Psoas muscle (tissue), 8 donors: ENCODE measurements at regions of chr6 and their contacts with region 1.

Region 1: DNA sequence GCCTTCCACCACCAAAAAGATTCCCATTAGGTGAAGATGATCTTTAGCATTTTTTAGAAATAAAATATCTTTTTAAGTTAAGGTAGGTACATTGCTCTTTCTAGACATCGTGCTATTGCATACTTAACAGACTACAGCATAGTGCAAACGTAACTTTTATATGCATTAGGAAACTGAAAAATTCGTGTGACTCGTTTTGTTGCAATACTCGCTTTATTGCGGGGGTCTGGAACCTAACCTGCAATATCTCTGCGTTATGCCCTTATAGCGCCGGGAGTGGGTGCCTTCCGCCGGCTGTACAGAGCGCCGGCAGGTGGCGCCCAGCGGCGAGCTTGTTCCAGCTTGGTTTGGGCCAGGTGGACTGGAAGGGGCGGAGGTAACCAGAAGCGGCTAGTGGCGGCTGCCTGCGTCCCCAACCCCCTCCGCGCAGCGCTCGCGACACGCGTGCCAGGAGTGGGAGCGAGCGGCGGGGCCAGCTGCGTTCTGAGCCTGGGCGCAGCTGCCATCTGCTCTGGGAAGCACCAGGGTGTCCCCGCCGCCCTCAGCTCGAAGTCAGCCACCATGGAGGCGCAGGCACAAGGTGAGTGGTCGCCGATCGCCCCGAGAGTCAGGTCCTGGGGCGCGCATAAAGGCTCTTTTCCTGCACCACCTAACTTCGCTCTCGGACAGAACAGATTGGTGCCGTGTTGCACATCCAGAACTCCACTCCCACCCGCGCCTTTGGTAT is at the start of gene TPD52L1:
- DNase-seq: peak; percentile 83 to 95
- ATAC-seq: peak; percentile 92 to 95 (median 93)
- H3K4me3 ChIP-seq: peak within 1 kb of the TSS; percentile 78
- H3K27ac ChIP-seq: peak within 1 kb of the TSS; percentile 91
- H3K4me1 ChIP-seq: peaks cover 56% of the 10 kb centered on the region
- H3K27me3 ChIP-seq: no peaks in the 10 kb centered on the region
- CTCF ChIP-seq: peak; percentile 95
- total RNA-seq, gene TPD52L1: 106 to 150 (median 136) TPM

Region 2: DNA sequence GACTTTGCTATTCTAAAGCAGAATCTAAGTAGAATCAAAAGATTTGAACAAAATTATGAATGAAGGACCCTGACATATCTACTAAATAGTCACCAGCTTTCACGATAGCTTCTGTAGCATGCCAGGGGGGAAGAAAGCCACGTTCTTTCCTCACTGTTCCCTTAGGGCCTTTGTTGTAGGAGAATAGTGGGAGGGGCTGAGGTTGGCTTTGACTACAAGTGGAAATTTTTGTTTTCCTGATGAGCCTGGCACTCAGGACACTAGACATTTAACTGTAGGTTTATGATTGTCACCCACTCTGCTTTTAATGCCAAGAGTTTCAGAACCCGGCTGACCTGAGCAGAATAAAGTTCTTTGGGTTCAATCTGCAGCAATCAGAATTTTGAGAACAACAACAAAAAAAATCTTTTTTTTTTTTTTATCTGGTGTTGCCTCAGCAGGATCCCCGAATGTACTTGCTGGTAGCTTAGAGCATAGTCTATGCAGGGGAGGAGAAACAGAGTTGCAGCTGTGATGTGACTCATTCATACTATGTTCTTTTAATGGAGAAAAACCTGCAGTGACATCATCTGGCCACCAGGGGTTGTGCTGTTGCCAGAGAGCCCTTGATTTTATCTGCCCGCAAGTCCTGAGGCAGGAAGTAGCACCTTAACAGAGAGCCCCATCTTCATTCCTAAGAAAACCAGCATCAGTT is 38.5 kb after region 1 on chr6:
- intact Hi-C with region 1: loop called (anchors 2 to 5 kb)
- DNase-seq: peak; percentile 52 to 68
- ATAC-seq: peak; percentile 42 to 80 (median 74)
- H3K4me3 ChIP-seq: no peak overlapping the region
- H3K27ac ChIP-seq: peak overlapping the region; percentile 89
- H3K4me1 ChIP-seq: peaks cover 76% of the 10 kb centered on the region
- H3K27me3 ChIP-seq: no peaks in the 10 kb centered on the region
- CTCF ChIP-seq: peak; percentile 68

Region 3: DNA sequence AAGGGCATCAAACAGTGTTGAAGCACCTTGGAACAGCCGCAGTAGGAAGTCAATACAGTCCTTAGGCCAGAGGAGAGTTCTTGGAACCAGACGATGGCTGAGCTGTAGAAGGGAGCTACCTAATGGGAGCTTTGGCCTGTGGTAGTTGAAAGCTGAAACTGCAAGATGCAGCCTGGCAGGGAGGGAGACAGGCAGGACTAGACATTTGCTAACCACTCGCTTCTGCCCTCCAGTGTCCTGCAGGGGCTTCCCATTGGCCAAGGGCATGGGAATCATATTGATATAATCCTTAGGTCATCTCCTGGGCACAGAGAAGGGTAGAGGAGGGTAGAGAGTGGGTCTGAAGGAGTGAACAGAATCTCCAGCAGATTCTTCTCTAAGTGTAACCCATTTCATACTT is 60.4 kb after region 1 on chr6:
- intact Hi-C with region 1: loop called in 1 of 2 experiments (anchors 5 kb)
- DNase-seq: peak in 1 of 2 donors; percentile 55
- ATAC-seq: peak; percentile 76 to 83 (median 78)
- H3K4me3 ChIP-seq: peak overlapping the region; percentile 8
- H3K27ac ChIP-seq: peak overlapping the region; percentile 60
- H3K4me1 ChIP-seq: peaks cover 65% of the 10 kb centered on the region
- H3K27me3 ChIP-seq: no peaks in the 10 kb centered on the region
- CTCF ChIP-seq: no peak

Region 4: DNA sequence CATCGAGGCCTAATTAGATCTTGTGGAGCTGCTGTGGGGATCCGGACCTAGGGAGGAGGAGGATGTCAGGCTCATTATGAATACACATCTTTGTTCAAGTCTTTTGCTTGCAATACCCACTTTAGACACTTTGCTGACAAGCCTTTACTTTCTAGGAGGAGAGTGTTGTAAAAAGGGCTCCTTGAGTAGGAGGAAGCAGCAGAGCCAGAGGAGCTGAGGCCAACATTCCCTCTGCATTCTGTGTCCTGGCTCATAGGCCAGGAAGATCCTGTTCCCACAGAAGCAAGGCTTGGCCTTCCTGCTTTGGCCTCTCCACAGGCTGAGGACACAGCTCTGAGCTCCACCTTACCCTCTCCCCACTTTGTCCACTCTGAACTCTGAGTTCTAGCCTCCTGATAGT is 67.2 kb after region 1 on chr6:
- intact Hi-C with region 1: loop called in 1 of 2 experiments (anchors 5 kb)
- DNase-seq: peak; percentile 35 to 78
- ATAC-seq: peak; percentile 72 to 96 (median 89)
- H3K4me3 ChIP-seq: no peak overlapping the region
- H3K27ac ChIP-seq: peak overlapping the region; percentile 67
- H3K4me1 ChIP-seq: peaks cover 77% of the 10 kb centered on the region
- H3K27me3 ChIP-seq: no peaks in the 10 kb centered on the region
- CTCF ChIP-seq: peak; percentile 14

Region 5: DNA sequence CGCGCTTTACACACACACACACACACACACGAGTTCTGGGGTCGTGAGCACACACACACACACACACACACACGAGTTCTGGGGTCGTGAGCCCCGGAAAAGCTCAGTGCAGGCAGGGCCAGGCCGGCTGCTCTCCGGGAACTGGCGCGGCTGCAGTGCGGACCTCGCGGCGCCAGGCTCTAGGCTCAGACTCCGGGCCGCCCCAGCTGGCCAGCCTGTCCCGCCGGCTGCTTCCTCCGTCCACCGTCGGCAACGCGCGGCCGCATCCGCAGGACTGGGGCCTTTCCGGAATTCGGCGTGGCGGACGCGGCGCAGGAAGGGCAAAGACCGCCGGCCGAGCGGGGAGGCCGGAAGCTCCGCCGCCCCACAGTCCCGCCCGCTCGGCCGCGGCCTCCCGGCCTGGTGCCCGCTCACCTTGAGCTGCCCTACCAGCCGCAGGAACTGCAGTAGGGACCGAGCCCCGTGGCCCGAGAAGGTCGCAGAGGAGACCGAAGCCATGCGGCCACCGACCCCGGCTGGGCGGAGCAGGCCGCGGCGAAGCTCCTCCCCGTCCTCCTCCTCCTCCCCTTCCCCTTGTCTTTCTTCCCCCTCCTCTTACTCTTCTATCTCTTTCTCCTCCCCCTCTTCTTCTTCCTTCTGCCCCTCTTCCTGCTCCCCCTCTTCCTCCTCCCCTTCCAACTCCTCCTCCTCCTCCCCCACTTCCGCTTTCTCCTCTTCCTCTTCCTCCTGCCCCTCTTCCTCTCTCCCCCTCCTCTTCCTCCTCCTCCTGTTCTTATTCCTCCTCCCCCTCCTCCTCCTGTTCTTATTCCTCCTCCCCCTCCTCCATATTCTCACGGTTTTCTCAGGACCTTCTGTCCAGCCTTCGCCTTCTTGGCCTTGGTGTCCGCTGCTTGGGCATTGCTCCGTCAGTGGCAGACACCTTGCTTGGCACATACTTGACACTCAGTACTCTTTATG is 148.2 kb after region 1 on chr6 and contains the start of gene HDDC2:
- intact Hi-C with region 1: loop called (anchors 2 to 5 kb)
- DNase-seq: peak; percentile 83 to 87
- ATAC-seq: peak; percentile 86 to 92 (median 88)
- H3K4me3 ChIP-seq: peak within 1 kb of the TSS; percentile 86
- H3K27ac ChIP-seq: peak within 1 kb of the TSS; percentile 92
- H3K4me1 ChIP-seq: peaks cover 21% of the 10 kb centered on the region
- H3K27me3 ChIP-seq: no peaks in the 10 kb centered on the region
- CTCF ChIP-seq: no peak
- total RNA-seq, gene HDDC2: 72.5 to 151 (median 86.0) TPM

Region 6: GRCh38 chr6:125764121-125764671 is 610.6 kb after region 1 on chr6:
- intact Hi-C with region 1: loop called (anchors 5 to 10 kb)
- DNase-seq: no peak
- ATAC-seq: no peak
- H3K4me3 ChIP-seq: no peak overlapping the region
- H3K27ac ChIP-seq: no peak overlapping the region
- H3K4me1 ChIP-seq: no peaks in the 10 kb centered on the region
- H3K27me3 ChIP-seq: no peaks in the 10 kb centered on the region
- CTCF ChIP-seq: no peak